Head of caudate nucleus (tissue), 42 donors: ENCODE measurements at regions of chr2 and their contacts with region 1.

Region 1: GRCh38 chr2:182650704-182651103 is 65.4 kb upstream of the DNAJC10 start:
- DNase-seq: no peak

Region 2: GRCh38 chr2:182186132-182186735 is 464.5 kb before region 1 on chr2:
- intact Hi-C with region 1: loop called (anchors 2 kb)
- DNase-seq: peak in 2 of 42 donors; percentile 9 to 45